ENCODE measurements at regions of chr3 and their contacts with region 1.

Region 1: DNA sequence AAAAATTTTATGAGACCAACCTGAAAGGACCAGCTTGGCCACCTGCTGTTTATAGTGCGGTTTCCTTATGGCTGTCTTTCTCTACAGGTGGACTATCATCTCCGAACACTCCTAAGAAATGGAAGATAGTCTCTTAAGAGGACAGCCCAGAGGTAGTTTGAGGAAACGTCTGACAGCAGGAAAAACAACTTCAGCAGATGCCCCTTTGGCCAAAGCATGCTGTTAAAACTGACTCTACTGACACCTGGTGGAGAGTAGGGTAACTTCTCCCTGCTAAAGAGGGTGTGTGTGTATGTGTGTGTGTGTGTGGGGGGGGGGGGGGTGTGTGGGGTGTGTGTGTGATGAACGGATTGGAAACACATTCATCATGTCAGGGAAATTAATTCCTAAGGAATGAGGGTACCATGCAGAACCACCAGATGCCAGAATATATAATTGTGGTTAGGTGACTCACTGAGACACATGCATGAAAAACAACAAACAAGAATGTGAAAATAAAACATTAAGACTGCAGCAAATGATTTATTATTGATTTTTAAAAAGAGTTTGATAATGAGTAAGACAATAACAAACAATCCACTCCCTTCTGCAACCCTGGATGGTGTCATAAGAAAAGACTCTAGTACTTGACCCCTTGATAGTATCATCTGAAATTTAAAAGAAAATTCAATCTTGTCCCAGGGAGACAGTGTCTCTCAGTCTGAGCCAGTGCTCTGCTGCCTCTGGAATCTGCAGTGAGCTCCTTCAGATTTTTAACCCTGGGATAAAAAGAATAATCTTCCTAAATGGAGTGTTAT is 256.5 kb downstream of the THRB start:
- DNase-seq: no peak
- ATAC-seq: peak; percentile 68 to 78 (median 72)
- H3K4me3 ChIP-seq: no peak overlapping the region
- H3K27ac ChIP-seq: peak overlapping the region; percentile 72
- H3K4me1 ChIP-seq: peaks cover 46% of the 10 kb centered on the region
- H3K27me3 ChIP-seq: no peaks in the 10 kb centered on the region
- CTCF ChIP-seq: peak; percentile 47

Region 2: DNA sequence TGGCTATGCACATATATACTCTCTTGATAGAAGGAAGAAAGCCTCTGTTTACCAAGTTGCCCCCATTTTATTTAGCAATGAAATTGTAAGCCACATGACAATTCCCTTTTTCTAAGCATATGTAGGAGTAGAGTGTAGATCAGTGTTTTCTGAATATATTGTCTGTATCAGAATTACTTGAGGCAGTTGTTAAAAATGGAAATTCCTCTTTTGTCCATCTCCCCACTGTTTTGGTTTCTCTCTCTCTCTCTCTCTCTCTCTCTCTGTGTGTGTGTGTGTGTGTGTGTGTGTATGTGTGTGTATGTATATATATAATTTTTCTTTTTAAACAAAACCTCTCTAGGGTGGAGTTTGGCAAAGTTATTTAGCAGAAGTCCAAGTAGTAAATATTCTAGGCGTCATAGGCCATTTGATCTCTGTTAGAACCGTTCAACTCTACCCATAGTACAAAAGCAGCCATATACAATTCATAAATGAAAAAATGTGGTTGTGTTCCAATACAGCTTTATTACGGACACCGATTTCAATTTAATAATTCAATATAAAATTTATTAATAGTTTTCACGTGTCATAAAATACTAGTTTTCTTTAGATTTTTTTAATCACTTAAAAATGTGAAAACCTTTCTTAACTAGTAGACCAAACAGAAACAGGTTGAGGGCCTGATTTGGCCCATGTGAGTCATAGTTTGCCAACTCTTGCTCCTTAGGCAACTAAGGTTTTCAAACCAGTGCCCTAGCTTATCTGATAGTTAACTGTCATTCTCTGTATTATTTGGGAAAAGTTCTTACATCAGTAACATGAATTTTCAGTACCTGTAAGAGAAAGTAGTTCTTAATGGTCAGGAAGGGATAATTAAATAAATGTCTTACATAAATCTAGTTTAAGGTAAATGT is 392.6 kb before region 1 on chr3:
- intact Hi-C with region 1: no loop called
- DNase-seq: no peak
- ATAC-seq: peak in 1 of 4 donors; percentile 64
- H3K4me3 ChIP-seq: no peak overlapping the region
- H3K27ac ChIP-seq: no peak overlapping the region
- H3K4me1 ChIP-seq: peaks cover 29% of the 10 kb centered on the region
- H3K27me3 ChIP-seq: no peaks in the 10 kb centered on the region
- CTCF ChIP-seq: no peak

Region 3: DNA sequence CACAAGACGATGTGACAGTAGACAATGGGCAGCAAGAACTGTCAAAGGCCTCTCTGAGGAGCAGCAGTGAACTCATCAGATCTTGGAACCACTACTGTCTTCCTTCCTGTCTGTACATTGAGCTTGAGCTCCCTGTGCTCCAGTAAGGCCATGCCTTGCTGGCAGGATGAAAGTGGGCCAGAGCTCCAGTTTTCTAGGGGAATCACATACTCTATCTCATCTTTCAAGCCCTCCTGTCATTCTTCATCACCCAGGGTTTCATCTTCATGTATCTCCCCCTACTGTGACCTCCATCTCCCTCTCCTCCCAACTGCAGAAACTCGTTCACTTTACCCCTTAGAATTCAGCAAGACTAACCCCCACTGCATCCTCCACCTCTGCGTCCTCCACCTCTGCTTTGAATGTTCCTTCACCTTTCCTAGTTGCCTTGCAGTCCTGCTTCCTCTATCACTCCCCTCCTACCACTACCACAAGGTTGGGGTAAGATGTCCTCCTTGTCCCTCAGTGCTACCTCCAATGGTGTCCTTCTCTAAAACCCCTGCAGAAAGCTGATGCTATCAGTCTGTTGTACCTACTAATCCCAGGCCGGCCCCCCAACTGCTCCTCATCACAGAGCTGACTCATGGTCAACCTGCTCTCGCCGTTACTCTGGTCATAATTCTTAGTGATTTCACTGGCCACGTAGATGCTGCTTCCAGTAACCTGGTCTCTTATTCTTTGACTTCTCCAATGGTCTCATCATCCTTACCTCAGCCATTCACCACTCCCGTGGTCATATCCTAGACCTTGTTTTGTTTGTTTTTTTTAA is 343.7 kb before region 1 on chr3:
- intact Hi-C with region 1: loop called in 1 of 2 experiments (anchors 5 kb)
- DNase-seq: no peak
- ATAC-seq: peak in 2 of 4 donors; percentile 12 to 32
- H3K4me3 ChIP-seq: no peak overlapping the region
- H3K27ac ChIP-seq: no peak overlapping the region
- H3K4me1 ChIP-seq: peaks cover 2% of the 10 kb centered on the region
- H3K27me3 ChIP-seq: no peaks in the 10 kb centered on the region
- CTCF ChIP-seq: no peak

Region 4: GRCh38 chr3:23999012-23999641 is 239.0 kb before region 1 on chr3:
- intact Hi-C with region 1: loop called (anchors 1 to 5 kb)
- DNase-seq: peak; percentile 61 to 76
- ATAC-seq: peak in 1 of 4 donors; percentile 74
- H3K4me3 ChIP-seq: no peak overlapping the region
- H3K27ac ChIP-seq: no peak overlapping the region
- H3K4me1 ChIP-seq: no peaks in the 10 kb centered on the region
- H3K27me3 ChIP-seq: no peaks in the 10 kb centered on the region
- CTCF ChIP-seq: peak; percentile 85

Region 5: DNA sequence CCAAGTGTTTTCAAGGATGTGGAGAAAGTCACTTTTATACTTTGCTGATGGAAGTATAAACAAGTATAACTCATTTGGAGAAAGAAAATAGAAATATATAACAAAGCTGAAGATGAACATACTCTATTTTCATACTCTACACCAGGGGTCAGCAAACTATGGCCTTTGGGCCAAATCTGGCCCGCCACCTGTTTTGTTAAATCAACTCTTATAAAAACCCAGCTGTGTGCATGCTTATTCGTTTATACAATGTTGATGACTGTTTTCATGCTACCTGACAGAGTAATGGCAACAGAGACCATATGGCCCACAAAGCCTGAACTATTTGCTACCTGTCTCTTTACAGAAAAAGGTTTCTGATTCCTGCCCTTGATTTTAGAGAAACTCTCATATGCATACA is 169.1 kb before region 1 on chr3:
- intact Hi-C with region 1: loop called (anchors 5 kb)
- DNase-seq: no peak
- ATAC-seq: peak; percentile 42 to 87 (median 78)
- H3K4me3 ChIP-seq: no peak overlapping the region
- H3K27ac ChIP-seq: no peak overlapping the region
- H3K4me1 ChIP-seq: peaks cover 11% of the 10 kb centered on the region
- H3K27me3 ChIP-seq: no peaks in the 10 kb centered on the region
- CTCF ChIP-seq: peak; percentile 58

Region 6: DNA sequence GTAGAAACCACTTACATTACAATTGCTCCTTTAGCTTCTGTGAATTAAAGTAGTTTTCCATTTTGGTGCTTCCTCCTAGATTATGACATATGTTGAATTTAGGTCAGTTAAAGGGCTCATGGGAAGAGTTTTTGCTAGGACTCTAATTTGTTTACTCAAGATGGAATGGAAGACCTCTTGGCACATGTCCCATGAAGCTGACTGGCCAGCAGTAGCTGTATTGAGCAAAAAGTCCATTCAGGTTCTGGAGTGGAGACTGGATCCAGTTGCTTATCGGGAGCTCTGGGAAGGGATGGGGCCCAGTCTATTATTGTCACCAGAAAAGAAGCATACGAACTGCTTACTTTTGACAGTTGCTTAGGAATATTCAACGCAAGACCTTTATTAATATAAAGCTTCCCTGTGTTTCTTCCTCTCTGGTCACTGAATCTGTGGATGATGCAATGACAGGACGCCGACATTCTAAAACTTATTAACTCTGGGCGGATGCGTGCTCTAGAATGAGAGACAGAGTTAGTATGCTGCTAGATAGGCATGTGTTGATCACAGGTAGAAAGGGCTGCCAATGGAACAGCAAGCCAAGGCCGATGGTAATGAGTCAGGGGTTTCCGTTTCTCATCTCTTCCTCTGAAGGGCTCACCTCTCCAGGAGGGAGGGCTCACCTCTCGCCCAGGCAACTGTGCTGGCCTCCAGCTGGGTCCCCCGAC is 137.3 kb before region 1 on chr3:
- intact Hi-C with region 1: no loop called
- DNase-seq: no peak
- ATAC-seq: no peak
- H3K4me3 ChIP-seq: no peak overlapping the region
- H3K27ac ChIP-seq: no peak overlapping the region
- H3K4me1 ChIP-seq: no peaks in the 10 kb centered on the region
- H3K27me3 ChIP-seq: no peaks in the 10 kb centered on the region
- CTCF ChIP-seq: no peak

Region 7: DNA sequence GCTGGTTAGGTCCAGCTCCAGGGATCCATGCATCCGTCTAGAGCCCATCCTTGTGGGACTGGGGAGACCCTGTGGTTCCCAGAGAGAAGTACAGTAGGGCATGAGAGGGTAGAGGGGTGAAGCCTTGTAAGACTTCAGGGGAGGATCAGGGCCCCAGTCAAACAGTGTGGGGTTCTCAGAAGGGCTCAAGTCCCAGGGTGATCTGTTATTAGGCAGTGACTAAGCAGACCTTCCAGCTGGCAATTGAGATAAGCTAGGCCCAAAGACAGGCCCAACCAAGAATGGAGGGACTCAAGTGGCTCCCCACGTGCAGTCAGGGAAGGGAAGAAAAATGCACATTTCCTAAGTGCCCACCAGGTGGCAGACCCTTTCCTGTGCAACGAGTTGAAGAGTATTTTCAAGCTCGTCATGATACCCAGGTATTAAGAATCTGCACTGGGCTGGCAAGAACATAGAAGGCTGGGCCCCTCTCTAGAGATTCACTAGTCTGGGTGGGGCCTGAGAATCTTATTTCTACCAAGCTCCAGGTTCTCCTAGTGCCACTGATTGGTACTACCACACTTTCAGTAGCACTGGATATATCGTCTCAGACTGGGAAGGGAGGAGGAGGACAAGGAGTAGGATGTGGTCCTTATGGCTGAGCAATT is 52.3 kb before region 1 on chr3:
- intact Hi-C with region 1: loop called (anchors 5 kb)
- DNase-seq: peak; percentile 23 to 56
- ATAC-seq: peak; percentile 73 to 87 (median 83)
- H3K4me3 ChIP-seq: no peak overlapping the region
- H3K27ac ChIP-seq: peak overlapping the region; percentile 56
- H3K4me1 ChIP-seq: peaks cover 30% of the 10 kb centered on the region
- H3K27me3 ChIP-seq: no peaks in the 10 kb centered on the region
- CTCF ChIP-seq: peak; percentile 54

Region 8: GRCh38 chr3:24196526-24196925 is 41.6 kb before region 1 on chr3:
- intact Hi-C with region 1: loop called in 1 of 2 experiments (anchors 5 kb)
- DNase-seq: no peak
- ATAC-seq: peak in 1 of 4 donors; percentile 19
- H3K4me3 ChIP-seq: no peak overlapping the region
- H3K27ac ChIP-seq: peak overlapping the region; percentile 90
- H3K4me1 ChIP-seq: peaks cover 50% of the 10 kb centered on the region
- H3K27me3 ChIP-seq: no peaks in the 10 kb centered on the region
- CTCF ChIP-seq: no peak